IMR-90 (cell line): ENCODE measurements at regions of chr9 and their contacts with region 1.

Region 1: DNA sequence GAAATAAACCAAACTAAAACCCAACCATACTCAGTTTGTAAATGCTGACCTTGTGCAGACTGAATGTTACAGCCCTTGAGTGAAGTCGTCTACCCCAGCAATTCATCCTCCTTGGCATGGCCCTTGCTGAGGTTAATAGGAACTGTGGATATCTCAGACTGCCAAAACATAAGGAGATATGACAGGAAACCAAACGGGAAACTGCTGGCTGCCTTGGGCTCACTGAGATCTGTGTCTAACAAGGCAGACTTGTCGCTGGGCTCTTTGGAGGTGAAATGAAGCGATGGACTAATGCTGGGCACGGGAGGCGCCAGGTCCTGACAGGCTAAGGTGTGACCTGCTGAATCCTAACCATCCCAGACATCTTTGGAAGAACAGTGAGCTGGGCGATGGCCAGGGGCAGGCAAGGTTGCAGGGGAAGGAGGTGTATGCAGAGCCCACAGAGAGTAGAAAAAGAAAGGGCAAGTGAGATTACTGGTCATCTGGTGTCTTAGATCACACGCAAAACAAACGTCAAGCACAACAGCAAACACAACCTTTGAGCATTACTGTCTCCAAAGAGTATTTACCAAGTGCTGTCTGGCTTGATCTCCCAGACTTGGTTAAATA is 44.6 kb upstream of the ALDH1A1 start:
- DNase-seq: no peak
- ATAC-seq: no peak
- H3K4me3 ChIP-seq: no peak overlapping the region
- H3K27ac ChIP-seq: no peak overlapping the region
- H3K4me1 ChIP-seq: no peaks in the 10 kb centered on the region
- H3K27me3 ChIP-seq: no peaks in the 10 kb centered on the region
- CTCF ChIP-seq: no peak
- POLR2A ChIP-seq: no peak
- RAD21 ChIP-seq: no peak

Region 2: GRCh38 chr9:72948906-72949582 is 48.4 kb before region 1 on chr9:
- CTCF ChIA-PET with region 1: no interaction called
- POLR2A ChIA-PET with region 1: no interaction called
- dilution Hi-C with region 1: no loop called
- in situ Hi-C with region 1: no loop called
- intact Hi-C with region 1: loop called (anchors 10 kb)
- DNase-seq: no peak
- ATAC-seq: no peak
- H3K4me3 ChIP-seq: no peak overlapping the region
- H3K27ac ChIP-seq: no peak overlapping the region
- H3K4me1 ChIP-seq: no peaks in the 10 kb centered on the region
- H3K27me3 ChIP-seq: no peaks in the 10 kb centered on the region
- CTCF ChIP-seq: no peak
- POLR2A ChIP-seq: no peak
- RAD21 ChIP-seq: no peak

Region 3: DNA sequence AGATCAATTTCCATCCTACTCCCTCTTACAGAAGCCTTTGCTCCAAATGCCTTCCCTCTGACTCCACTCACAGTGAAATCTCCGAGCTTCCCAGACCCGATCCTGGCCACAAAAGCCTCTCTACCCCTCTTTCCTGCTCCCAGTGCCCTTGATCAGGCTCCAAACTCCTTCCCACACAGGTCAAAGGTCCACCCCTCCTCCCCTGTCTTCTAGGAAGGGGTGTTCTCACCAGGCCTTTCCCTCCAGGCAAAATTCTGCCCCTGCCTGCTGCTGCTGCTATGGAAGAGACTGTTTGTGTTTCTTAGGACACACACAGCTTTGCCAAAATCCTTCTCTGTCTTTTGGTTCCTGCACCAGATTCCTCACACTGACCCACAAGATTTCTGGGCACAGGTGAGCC is 41.1 kb after region 1 on chr9:
- CTCF ChIA-PET with region 1: no interaction called
- POLR2A ChIA-PET with region 1: no interaction called
- dilution Hi-C with region 1: no loop called
- in situ Hi-C with region 1: no loop called
- intact Hi-C with region 1: loop called (anchors 5 kb)
- DNase-seq: no peak
- ATAC-seq: no peak
- H3K4me3 ChIP-seq: no peak overlapping the region
- H3K27ac ChIP-seq: no peak overlapping the region
- H3K4me1 ChIP-seq: no peaks in the 10 kb centered on the region
- H3K27me3 ChIP-seq: peaks cover 2% of the 10 kb centered on the region; the same call in 1 of the 2 replicates
- CTCF ChIP-seq: no peak
- POLR2A ChIP-seq: no peak
- RAD21 ChIP-seq: no peak

Region 4: DNA sequence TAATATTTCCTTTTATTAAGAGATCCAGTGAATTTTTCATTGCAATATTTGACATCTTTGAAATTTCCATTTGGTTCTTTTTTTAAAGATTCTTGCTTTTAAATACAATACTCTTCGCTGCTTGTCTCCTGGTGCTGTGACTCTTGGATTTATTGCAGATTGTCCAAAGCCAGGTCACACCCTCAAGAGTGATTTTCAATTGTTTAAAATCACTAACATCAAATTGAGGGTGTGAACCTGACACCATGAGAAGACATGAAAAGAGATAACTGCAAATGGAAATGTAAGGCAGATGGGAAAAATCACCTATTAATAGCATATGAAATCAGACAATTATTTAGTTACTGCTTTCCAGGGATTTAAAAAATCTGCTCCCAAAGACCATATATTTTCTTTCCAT is 196.8 kb after region 1 on chr9:
- CTCF ChIA-PET with region 1: no interaction called
- POLR2A ChIA-PET with region 1: no interaction called
- dilution Hi-C with region 1: no loop called
- in situ Hi-C with region 1: no loop called
- intact Hi-C with region 1: no loop called
- DNase-seq: no peak
- ATAC-seq: no peak
- H3K4me3 ChIP-seq: no peak overlapping the region
- H3K27ac ChIP-seq: no peak overlapping the region
- H3K4me1 ChIP-seq: no peaks in the 10 kb centered on the region
- H3K27me3 ChIP-seq: no peaks in the 10 kb centered on the region
- CTCF ChIP-seq: no peak
- POLR2A ChIP-seq: no peak
- RAD21 ChIP-seq: no peak